GM12878 (cell line): ENCODE measurements at regions of chr13 and their contacts with region 1.

Region 1: GRCh38 chr13:25114220-25114619 is 18.3 kb downstream of the PABPC3 start:
- DNase-seq: peak; percentile 56
- ATAC-seq: peak; percentile 96
- H3K4me3 ChIP-seq: no peak overlapping the region
- H3K27ac ChIP-seq: no peak overlapping the region
- H3K4me1 ChIP-seq: peaks cover 9% of the 10 kb centered on the region
- H3K27me3 ChIP-seq: peaks cover 0 to 3% of the 10 kb centered on the region in 2 experiments; a peak in 1 of 4 replicates
- CTCF ChIP-seq: peak; percentile 88 to 96 (median 90)
- EP300 ChIP-seq: no peak
- POLR2A ChIP-seq: no peak
- RAD21 ChIP-seq: peak; percentile 82

Region 2: GRCh38 chr13:25001476-25002206 is 112.6 kb before region 1 on chr13:
- CTCF ChIA-PET with region 1: interaction called, 12 read pairs
- POLR2A ChIA-PET with region 1: no interaction called
- RAD21 ChIA-PET with region 1: interaction called, 3 read pairs
- SMC1A ChIA-PET with region 1: interaction called, 4 read pairs
- in situ Hi-C with region 1: no loop called
- intact Hi-C with region 1: loop called (anchors 2 kb)
- DNase-seq: no peak
- ATAC-seq: no peak
- H3K4me3 ChIP-seq: no peak overlapping the region
- H3K27ac ChIP-seq: no peak overlapping the region
- H3K4me1 ChIP-seq: no peaks in the 10 kb centered on the region
- H3K27me3 ChIP-seq: 0 out of 4 replicates have a peak, but pooled peaks cover 0 to 1% of the 10 kb centered on the region in 2 experiments
- CTCF ChIP-seq: no peak
- EP300 ChIP-seq: no peak
- POLR2A ChIP-seq: no peak
- RAD21 ChIP-seq: no peak

Region 3: GRCh38 chr13:25085125-25085742 is 29.0 kb before region 1 on chr13:
- CTCF ChIA-PET with region 1: interaction called, 48 read pairs
- POLR2A ChIA-PET with region 1: no interaction called
- RAD21 ChIA-PET with region 1: interaction called, 5 read pairs
- SMC1A ChIA-PET with region 1: interaction called, 8 read pairs
- in situ Hi-C with region 1: no loop called
- intact Hi-C with region 1: loop called (anchors 1 kb)
- DNase-seq: no peak
- ATAC-seq: peak; percentile 91
- H3K4me3 ChIP-seq: no peak overlapping the region; the same call in 1 of the 2 replicates
- H3K27ac ChIP-seq: no peak overlapping the region
- H3K4me1 ChIP-seq: 0 out of 2 replicates have a peak, but pooled peaks cover 3% of the 10 kb centered on the region
- H3K27me3 ChIP-seq: no peaks in the 10 kb centered on the region; a peak in 1 of 4 replicates
- CTCF ChIP-seq: peak; percentile 62 to 75 (median 75)
- EP300 ChIP-seq: no peak
- POLR2A ChIP-seq: no peak
- RAD21 ChIP-seq: peak; percentile 81

Region 4: GRCh38 chr13:25095862-25096453 is 18.3 kb before region 1 on chr13 and contains the start of gene PABPC3:
- CTCF ChIA-PET with region 1: interaction called, 18 read pairs
- POLR2A ChIA-PET with region 1: no interaction called
- RAD21 ChIA-PET with region 1: no interaction called
- SMC1A ChIA-PET with region 1: interaction called, 3 read pairs
- in situ Hi-C with region 1: no loop called
- intact Hi-C with region 1: no loop called
- DNase-seq: no peak
- ATAC-seq: no peak
- H3K4me3 ChIP-seq: no peak within 1 kb of the TSS
- H3K27ac ChIP-seq: no peak within 1 kb of the TSS
- H3K4me1 ChIP-seq: no peaks in the 10 kb centered on the region
- H3K27me3 ChIP-seq: peaks cover 0 to 6% of the 10 kb centered on the region in 2 experiments; a peak in 2 of 4 replicates
- CTCF ChIP-seq: no peak
- EP300 ChIP-seq: no peak
- POLR2A ChIP-seq: no peak
- RAD21 ChIP-seq: no peak
- polyA plus RNA-seq, gene PABPC3: 0.26 to 0.35 TPM

Region 5: DNA sequence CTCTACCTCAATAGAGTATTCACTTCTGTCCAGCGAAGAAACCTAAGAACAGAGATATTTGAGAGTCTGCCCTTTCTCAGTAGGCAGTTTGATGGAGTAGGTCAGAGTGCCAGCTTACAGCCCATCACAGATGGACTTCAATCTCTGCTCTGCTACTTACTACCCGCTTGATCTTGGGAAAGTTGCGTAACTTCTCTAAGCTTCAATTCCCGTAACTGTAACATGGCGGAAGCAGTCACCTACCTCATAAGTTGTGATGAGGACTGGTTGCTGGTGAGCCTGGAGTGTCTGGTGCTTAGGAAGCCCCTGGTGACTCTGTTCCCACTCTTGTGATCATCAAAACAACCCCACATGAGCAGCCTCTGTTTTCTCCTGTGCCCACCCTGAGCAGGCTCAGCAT is 26.8 kb after region 1 on chr13:
- CTCF ChIA-PET with region 1: no interaction called
- POLR2A ChIA-PET with region 1: no interaction called
- RAD21 ChIA-PET with region 1: no interaction called
- SMC1A ChIA-PET with region 1: no interaction called
- in situ Hi-C with region 1: no loop called
- intact Hi-C with region 1: no loop called
- DNase-seq: no peak
- ATAC-seq: no peak
- H3K4me3 ChIP-seq: no peak overlapping the region
- H3K27ac ChIP-seq: no peak overlapping the region
- H3K4me1 ChIP-seq: no peaks in the 10 kb centered on the region
- H3K27me3 ChIP-seq: no peaks in the 10 kb centered on the region; a peak in 2 of 4 replicates
- CTCF ChIP-seq: no peak
- EP300 ChIP-seq: no peak
- POLR2A ChIP-seq: no peak
- RAD21 ChIP-seq: no peak

Region 6: GRCh38 chr13:25249001-25249543 is 134.9 kb after region 1 on chr13:
- CTCF ChIA-PET with region 1: interaction called, 5 read pairs
- POLR2A ChIA-PET with region 1: no interaction called
- RAD21 ChIA-PET with region 1: interaction called, 3 read pairs
- SMC1A ChIA-PET with region 1: no interaction called
- in situ Hi-C with region 1: no loop called
- intact Hi-C with region 1: loop called (anchors 1 kb)
- DNase-seq: peak; percentile 17
- ATAC-seq: peak; percentile 91
- H3K4me3 ChIP-seq: no peak overlapping the region
- H3K27ac ChIP-seq: peak overlapping the region; percentile 21; the same call in 1 of the 2 replicates
- H3K4me1 ChIP-seq: peaks cover 18% of the 10 kb centered on the region
- H3K27me3 ChIP-seq: no peaks in the 10 kb centered on the region
- CTCF ChIP-seq: peak; percentile 45 to 66 (median 64); a peak in 5 of 6 replicates
- EP300 ChIP-seq: no peak
- POLR2A ChIP-seq: no peak
- RAD21 ChIP-seq: peak; percentile 86